CD4-positive, alpha-beta memory T cell (primary cell): ENCODE measurements at regions of chr4 and their contacts with region 1.

Region 1: GRCh38 chr4:2262143-2262943 is 434 bp upstream of the MXD4 start:
- DNase-seq: peak; percentile 98 to 99 (median 99)
- H3K4me3 ChIP-seq: peak overlapping the region in 1 of 2 donors; percentile 70
- H3K4me3 Mint-ChIP-seq: peak overlapping the region; percentile 65 to 93 (median 82)
- H3K27ac ChIP-seq: peak overlapping the region; percentile 89
- H3K27ac Mint-ChIP-seq: peak overlapping the region; percentile 59 to 92 (median 88)
- H3K4me1 ChIP-seq: peaks cover 46% of the 10 kb centered on the region
- H3K4me1 Mint-ChIP-seq: peaks cover 2 to 24% (median 5%) of the 10 kb centered on the region in 4 donors
- H3K27me3 ChIP-seq: no peaks in the 10 kb centered on the region
- H3K27me3 Mint-ChIP-seq: no peaks in the 10 kb centered on the region

Region 2: DNA sequence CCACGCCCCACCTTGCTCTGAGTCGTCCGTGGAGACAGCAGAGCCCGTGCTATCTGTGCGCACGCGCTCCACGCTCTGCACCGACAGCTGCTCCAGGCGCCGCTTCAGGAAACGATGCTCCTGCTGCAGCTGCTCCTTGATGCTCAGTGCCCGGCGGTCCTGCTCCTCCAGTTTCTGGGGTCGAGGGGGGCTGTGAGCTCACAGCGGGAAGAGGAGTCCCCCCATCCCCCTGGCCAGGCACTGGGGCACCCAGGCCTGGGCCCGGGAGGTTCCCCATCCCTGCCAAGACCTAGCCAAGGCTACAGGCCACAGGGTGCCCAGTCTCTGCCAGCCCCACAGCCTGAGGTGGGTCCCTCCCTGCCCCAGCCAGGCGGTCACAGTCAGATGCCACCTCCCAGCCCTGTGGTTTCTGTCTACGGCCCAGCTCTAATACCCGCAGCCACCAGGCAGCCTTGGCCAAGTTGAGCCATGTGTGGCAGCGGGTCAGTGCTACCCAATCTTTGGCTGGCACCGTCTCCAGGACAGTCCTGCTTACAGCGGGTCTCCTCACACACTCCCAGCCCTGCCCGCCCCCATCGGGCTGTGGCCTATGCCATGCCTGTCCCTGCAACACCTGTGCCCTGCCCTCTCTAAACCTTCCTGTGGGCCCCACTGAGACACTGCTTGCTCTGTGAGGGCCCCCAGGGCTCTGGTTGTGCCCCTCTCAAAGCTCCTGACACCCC is 11.1 kb before region 1 on chr4:
- CTCF ChIA-PET with region 1: no interaction called
- POLR2A ChIA-PET with region 1: interaction called, 10 read pairs
- intact Hi-C with region 1: no loop called
- DNase-seq: peak in 1 of 5 donors; percentile 7
- H3K4me3 ChIP-seq: no peak overlapping the region
- H3K4me3 Mint-ChIP-seq: no peak overlapping the region
- H3K27ac ChIP-seq: no peak overlapping the region
- H3K27ac Mint-ChIP-seq: peak overlapping the region in 1 of 7 donors; percentile 48
- H3K4me1 ChIP-seq: no peaks in the 10 kb centered on the region
- H3K4me1 Mint-ChIP-seq: peaks cover 4 to 12% (median 7%) of the 10 kb centered on the region in 4 donors
- H3K27me3 ChIP-seq: no peaks in the 10 kb centered on the region
- H3K27me3 Mint-ChIP-seq: no peaks in the 10 kb centered on the region

Region 3: DNA sequence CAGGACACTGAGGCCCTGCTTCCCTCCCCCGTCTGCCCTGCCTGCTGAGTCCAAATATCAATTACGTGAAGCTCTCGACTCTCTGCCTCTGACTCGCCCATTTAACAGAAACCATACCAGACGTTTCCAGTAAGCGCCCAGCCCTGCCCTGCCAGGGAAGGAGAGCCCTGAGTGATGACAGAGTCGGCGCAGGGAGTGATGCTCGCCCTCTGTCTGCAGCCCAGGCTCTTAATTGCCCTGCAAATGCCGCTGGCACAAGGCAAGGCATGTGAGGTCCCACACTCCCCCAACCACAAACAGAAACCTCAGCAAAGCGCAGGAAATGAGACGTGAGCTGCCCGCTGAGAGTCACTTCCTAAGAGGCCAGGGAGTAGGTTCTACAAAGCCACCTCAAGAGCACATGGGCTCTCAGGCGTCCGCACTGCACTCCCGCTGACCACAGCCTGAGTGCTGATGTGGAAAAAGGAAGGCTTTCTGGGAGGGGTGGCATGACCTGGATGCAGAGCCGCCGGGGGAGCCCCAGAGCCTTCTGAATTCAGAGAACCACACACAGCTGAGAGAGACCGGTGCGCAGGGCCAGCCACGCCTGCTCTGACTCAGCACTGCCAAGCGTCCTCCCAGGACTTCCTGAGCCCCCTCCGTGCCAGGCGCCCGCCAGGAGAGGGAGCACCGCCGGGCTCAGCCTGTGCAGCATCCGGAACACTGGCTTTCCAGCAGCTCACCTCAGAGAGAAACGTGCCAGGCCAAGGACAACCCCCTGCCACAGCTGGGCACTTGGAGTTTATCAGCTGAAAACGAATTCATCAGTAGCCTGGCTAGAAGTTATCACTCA is 150.8 kb after region 1 on chr4:
- CTCF ChIA-PET with region 1: interaction called, 7 read pairs
- POLR2A ChIA-PET with region 1: interaction called, 63 read pairs
- intact Hi-C with region 1: loop called (anchors 1 kb)
- DNase-seq: peak; percentile 96 to 99 (median 97)
- H3K4me3 ChIP-seq: peak overlapping the region; percentile 15 to 55
- H3K4me3 Mint-ChIP-seq: peak overlapping the region; percentile 79 to 90 (median 82)
- H3K27ac ChIP-seq: peak overlapping the region; percentile 86
- H3K27ac Mint-ChIP-seq: peak overlapping the region; percentile 92 to 99 (median 98)
- H3K4me1 ChIP-seq: peaks cover 81% of the 10 kb centered on the region
- H3K4me1 Mint-ChIP-seq: peaks cover 49 to 81% (median 64%) of the 10 kb centered on the region in 4 donors
- H3K27me3 ChIP-seq: no peaks in the 10 kb centered on the region
- H3K27me3 Mint-ChIP-seq: peaks cover 0 to 2% of the 10 kb centered on the region in 2 donors

Region 4: DNA sequence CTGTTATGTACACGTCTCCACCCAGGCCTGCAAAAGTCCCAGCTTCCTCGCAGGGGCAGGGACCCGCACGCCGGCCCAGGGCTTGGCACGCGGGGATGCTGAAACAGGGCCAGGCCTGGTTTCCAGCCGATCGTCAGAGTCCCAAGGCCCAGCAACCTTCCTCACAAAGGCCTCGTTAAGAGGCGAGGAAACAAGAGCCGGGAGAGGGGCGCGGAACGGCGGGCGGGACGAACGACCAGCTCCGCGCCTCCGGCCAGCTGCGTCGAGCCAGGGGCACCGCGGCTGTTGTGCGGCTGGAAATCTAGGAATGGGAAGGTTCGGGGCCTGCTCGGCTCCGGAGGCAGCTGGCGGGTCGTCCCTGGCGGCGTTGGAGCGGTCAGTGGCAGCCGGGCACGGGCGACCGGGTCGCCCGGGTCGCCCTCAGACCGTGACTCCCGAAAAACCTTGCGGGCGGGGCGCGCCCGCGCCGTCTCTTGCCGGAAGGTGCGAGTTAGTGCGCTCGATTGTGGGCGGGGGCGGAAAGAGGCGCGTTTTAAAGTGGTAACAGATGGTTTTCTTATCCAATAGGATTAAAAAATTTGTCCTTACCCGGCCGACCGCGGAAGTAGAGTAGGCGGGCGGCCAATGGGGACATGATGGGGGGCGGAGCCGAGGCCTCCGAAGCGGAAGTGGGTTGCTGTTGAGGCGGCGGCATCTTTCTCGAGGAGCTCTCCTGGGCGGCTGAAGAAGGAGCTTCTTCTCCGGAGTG is 206.3 kb after region 1 on chr4 and contains the start of gene RNF4:
- CTCF ChIA-PET with region 1: no interaction called
- POLR2A ChIA-PET with region 1: interaction called, 29 read pairs
- intact Hi-C with region 1: loop called (anchors 1 kb)
- DNase-seq: peak; percentile 94 to 98 (median 97)
- H3K4me3 ChIP-seq: peak within 1 kb of the TSS; percentile 67 to 84
- H3K4me3 Mint-ChIP-seq: peak within 1 kb of the TSS; percentile 95 to 98 (median 95)
- H3K27ac ChIP-seq: peak within 1 kb of the TSS; percentile 98
- H3K27ac Mint-ChIP-seq: peak within 1 kb of the TSS; percentile 96 to 99 (median 98)
- H3K4me1 ChIP-seq: peaks cover 52% of the 10 kb centered on the region
- H3K4me1 Mint-ChIP-seq: peaks cover 28 to 62% (median 41%) of the 10 kb centered on the region in 4 donors
- H3K27me3 ChIP-seq: no peaks in the 10 kb centered on the region
- H3K27me3 Mint-ChIP-seq: no peaks in the 10 kb centered on the region
- total RNA-seq, gene RNF4: 94.0 to 104 TPM